T-cell (primary cell): ENCODE measurements at regions of chr2 and their contacts with region 1.

Region 1: GRCh38 chr2:74414881-74415761 is 6.3 kb downstream of the C2orf81 start:
- DNase-seq: peak in 8 of 35 experiments; percentile 13 to 36 (median 30)
- ATAC-seq: peak; percentile 37 to 67 (median 48)
- H3K4me3 ChIP-seq: peak overlapping the region; percentile 44 to 67
- H3K4me3 Mint-ChIP-seq: peak overlapping the region; percentile 61 to 76 (median 73)
- H3K27ac ChIP-seq: no peak overlapping the region
- H3K27ac Mint-ChIP-seq: peak overlapping the region in 1 of 2 donors; percentile 82
- H3K4me1 ChIP-seq: peaks cover 3 to 20% of the 10 kb centered on the region in 2 experiments
- H3K4me1 Mint-ChIP-seq: peaks cover 23 to 24% (median 24%) of the 10 kb centered on the region in 3 donors
- H3K27me3 ChIP-seq: peaks cover 0 to 25% of the 10 kb centered on the region in 2 experiments
- H3K27me3 Mint-ChIP-seq: peaks cover 0 to 18% of the 10 kb centered on the region in 2 donors

Region 2: GRCh38 chr2:74436111-74436797 is 21.1 kb after region 1 on chr2:
- CTCF ChIA-PET with region 1: no interaction called
- POLR2A ChIA-PET with region 1: interaction called in 1 of 2 experiments, 18 read pairs
- DNase-seq: no peak
- ATAC-seq: no peak
- H3K4me3 ChIP-seq: no peak overlapping the region
- H3K4me3 Mint-ChIP-seq: no peak overlapping the region
- H3K27ac ChIP-seq: no peak overlapping the region
- H3K27ac Mint-ChIP-seq: no peak overlapping the region
- H3K4me1 ChIP-seq: peaks cover 0 to 15% of the 10 kb centered on the region in 2 experiments
- H3K4me1 Mint-ChIP-seq: peaks cover 6 to 10% (median 10%) of the 10 kb centered on the region in 3 donors
- H3K27me3 ChIP-seq: peaks cover 0 to 26% of the 10 kb centered on the region in 2 experiments
- H3K27me3 Mint-ChIP-seq: peaks cover 11 to 24% of the 10 kb centered on the region in 2 donors